A673 (cell line): ENCODE measurements at regions of chr1 and their contacts with region 1.

Region 1: GRCh38 chr1:160951443-160952128 is 3.0 kb downstream of the ITLN2 start:
- DNase-seq: peak; percentile 72
- H3K4me3 ChIP-seq: no peak overlapping the region
- H3K27ac ChIP-seq: no peak overlapping the region
- H3K4me1 ChIP-seq: no peaks in the 10 kb centered on the region
- H3K27me3 ChIP-seq: no peaks in the 10 kb centered on the region
- CTCF ChIP-seq: peak; percentile 89

Region 2: GRCh38 chr1:160834945-160835565 is 116.5 kb before region 1 on chr1:
- CTCF ChIA-PET with region 1: interaction called, 5 read pairs
- POLR2A ChIA-PET with region 1: no interaction called
- intact Hi-C with region 1: loop called (anchors 2 kb)
- DNase-seq: peak; percentile 55
- H3K4me3 ChIP-seq: no peak overlapping the region
- H3K27ac ChIP-seq: no peak overlapping the region
- H3K4me1 ChIP-seq: no peaks in the 10 kb centered on the region
- H3K27me3 ChIP-seq: no peaks in the 10 kb centered on the region
- CTCF ChIP-seq: peak; percentile 77